PC-3 (cell line): ENCODE measurements at regions of chr2 and their contacts with region 1.

Region 1: DNA sequence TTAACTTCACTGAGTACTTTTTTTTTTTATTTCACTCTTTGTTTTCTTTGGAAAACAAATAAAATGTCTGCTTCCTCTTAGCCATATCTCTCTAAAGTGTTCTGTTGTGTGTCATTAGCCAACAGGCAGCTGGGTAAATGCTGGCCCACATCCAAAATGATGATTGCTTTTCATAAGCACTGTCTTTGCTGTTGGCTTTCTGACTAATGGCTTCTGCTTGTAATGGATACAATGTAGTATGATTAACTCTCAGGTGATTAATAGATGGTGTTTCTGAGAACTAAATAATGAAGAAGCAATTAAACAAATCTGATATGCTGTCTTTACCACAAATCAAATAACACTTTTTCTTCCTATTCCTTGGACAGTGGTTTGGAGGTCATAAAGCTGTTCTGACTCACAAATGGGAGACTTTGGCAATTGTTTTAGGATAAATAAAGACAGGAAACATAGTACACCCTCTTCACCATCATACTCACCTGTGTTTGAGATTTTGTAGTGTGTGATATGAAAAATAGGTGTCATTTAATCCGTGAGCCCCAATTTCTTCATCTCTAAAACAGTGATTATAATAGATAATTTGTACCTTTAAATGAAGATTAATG is 888.4 kb downstream of the TSN start:
- DNase-seq: peak; percentile 97
- ATAC-seq: peak; percentile 95
- H3K4me3 ChIP-seq: no peak overlapping the region
- H3K27ac ChIP-seq: peak overlapping the region; percentile 64
- H3K4me1 ChIP-seq: peaks cover 23% of the 10 kb centered on the region
- H3K27me3 ChIP-seq: no peaks in the 10 kb centered on the region
- CTCF ChIP-seq: no peak

Region 2: GRCh38 chr2:122514451-122514996 is 129.3 kb before region 1 on chr2:
- CTCF ChIA-PET with region 1: no interaction called
- POLR2A ChIA-PET with region 1: no interaction called
- intact Hi-C with region 1: loop called (anchors 1 kb)
- DNase-seq: peak; percentile 59
- ATAC-seq: peak; percentile 85
- H3K4me3 ChIP-seq: no peak overlapping the region
- H3K27ac ChIP-seq: no peak overlapping the region
- H3K4me1 ChIP-seq: peaks cover 4% of the 10 kb centered on the region
- H3K27me3 ChIP-seq: no peaks in the 10 kb centered on the region
- CTCF ChIP-seq: peak; percentile 40; the same call in 1 of the 2 replicates

Region 3: GRCh38 chr2:122831649-122832048 is 187.8 kb after region 1 on chr2:
- CTCF ChIA-PET with region 1: no interaction called
- POLR2A ChIA-PET with region 1: no interaction called
- intact Hi-C with region 1: loop called (anchors 5 kb)
- DNase-seq: peak; percentile 93
- ATAC-seq: peak; percentile 90
- H3K4me3 ChIP-seq: no peak overlapping the region
- H3K27ac ChIP-seq: peak overlapping the region; percentile 45
- H3K4me1 ChIP-seq: peaks cover 28% of the 10 kb centered on the region
- H3K27me3 ChIP-seq: no peaks in the 10 kb centered on the region
- CTCF ChIP-seq: no peak